Left colon (tissue), 2 donors: ENCODE measurements at regions of chr10 and their contacts with region 1.

Region 1: GRCh38 chr10:103069453-103070331 is 123.4 kb downstream of the NT5C2 start:
- DNase-seq: peak; percentile 44 to 83
- ATAC-seq: peak; percentile 85

Region 2: DNA sequence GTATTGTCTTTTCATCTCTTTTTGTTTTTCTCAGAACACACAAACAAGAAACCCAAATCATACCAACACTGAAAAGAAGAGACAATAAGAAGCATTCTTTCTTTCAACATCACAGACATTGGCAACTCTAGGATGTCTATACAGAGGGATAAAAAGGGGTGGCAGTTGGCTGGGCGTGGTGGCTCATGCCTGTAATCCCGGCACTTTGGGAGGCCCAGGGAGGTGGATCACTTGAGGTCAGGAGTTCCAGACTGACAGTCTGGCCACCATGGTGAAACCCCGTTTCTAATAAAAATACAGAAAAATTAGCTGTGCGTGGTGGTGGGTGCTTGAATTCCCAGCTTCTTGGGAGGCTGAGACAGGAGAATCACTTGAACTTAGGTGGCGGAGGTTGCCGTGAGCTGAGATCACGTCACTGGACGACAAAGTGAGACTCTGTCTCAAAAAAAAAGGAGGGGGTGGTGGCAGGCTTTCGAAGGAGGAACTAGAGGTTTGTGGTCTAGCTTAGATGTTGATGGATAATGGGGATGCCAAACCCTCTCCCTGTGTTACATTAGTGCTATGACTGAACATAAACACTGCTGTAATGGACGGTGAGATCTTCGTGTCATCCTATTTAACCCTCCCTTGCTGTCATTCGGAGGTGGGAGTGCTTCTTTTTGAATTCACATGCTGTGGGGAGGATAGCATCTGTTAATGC is 142.2 kb before region 1 on chr10:
- intact Hi-C with region 1: loop called in 1 of 2 experiments (anchors 10 kb)
- DNase-seq: peak in 1 of 2 donors; percentile 27
- ATAC-seq: peak; percentile 44

Region 3: DNA sequence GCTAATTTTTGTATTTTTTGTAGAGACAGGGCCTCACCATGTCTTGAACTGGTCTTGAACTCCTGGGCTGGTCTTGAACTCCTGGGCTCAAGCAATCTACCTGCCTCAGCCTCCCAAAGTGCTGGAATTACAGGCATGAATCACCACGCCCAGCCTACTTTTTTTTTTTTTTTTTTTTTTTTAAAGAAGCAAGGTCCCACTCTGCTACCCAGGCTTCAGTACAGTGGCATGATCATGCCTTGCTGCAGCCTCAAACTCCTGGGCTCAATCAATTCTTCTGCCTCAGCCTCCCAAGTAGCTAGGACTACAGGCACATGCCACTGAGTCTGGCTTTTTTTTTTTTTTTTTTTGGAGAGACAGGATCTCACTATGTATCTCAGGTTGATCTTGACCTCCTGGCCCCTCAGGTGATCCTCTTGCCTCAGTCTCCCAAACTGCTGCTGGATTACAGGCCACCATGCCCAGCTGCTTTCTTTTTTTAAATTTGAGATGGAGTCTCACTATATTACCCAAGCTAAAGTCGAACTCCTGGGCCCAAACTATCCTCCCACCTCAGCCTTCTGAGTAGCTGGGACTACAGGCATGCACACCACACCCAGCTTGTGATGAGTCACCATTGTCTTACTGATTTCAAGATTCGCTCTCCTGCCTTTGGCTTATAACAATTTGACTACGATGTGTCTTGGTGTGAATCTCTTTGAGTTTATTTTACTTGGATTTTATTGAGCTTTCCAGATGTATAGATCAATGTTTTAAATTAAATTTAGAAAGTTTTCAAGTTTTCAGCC is 185.0 kb after region 1 on chr10:
- intact Hi-C with region 1: no loop called
- DNase-seq: no peak
- ATAC-seq: no peak